GM10248 (cell line): ENCODE measurements at regions of chr20 and their contacts with region 1.

Region 1: GRCh38 chr20:50987592-50988210 is 29.1 kb downstream of the MOCS3 start:
- DNase-seq: peak; percentile 74
- CTCF ChIP-seq: peak; percentile 79

Region 2: GRCh38 chr20:50776122-50776817 is 211.4 kb before region 1 on chr20:
- CTCF ChIA-PET with region 1: no interaction called
- POLR2A ChIA-PET with region 1: no interaction called
- DNase-seq: no peak
- CTCF ChIP-seq: no peak

Region 3: DNA sequence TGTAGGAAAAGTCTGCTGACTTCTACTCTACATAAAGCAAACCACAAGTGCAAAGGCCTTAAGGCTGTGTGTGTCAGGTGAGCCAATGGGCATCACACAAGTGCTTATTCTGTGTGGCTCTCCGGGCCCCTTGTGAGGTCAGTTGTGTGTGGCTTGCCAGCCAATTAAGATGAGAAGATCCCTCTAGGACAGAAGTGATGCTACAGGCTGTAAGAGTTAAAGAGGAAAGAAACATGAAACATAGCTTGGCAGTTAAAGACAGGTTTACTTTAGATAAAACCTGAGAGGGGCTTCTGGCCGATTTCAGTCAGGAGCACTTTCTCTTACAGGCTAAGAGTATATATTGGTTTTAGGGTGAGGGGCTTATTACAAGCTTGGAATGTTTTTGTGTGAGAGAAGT is 312.4 kb after region 1 on chr20:
- CTCF ChIA-PET with region 1: interaction called, 194 read pairs
- POLR2A ChIA-PET with region 1: no interaction called
- DNase-seq: no peak
- CTCF ChIP-seq: no peak

Region 4: DNA sequence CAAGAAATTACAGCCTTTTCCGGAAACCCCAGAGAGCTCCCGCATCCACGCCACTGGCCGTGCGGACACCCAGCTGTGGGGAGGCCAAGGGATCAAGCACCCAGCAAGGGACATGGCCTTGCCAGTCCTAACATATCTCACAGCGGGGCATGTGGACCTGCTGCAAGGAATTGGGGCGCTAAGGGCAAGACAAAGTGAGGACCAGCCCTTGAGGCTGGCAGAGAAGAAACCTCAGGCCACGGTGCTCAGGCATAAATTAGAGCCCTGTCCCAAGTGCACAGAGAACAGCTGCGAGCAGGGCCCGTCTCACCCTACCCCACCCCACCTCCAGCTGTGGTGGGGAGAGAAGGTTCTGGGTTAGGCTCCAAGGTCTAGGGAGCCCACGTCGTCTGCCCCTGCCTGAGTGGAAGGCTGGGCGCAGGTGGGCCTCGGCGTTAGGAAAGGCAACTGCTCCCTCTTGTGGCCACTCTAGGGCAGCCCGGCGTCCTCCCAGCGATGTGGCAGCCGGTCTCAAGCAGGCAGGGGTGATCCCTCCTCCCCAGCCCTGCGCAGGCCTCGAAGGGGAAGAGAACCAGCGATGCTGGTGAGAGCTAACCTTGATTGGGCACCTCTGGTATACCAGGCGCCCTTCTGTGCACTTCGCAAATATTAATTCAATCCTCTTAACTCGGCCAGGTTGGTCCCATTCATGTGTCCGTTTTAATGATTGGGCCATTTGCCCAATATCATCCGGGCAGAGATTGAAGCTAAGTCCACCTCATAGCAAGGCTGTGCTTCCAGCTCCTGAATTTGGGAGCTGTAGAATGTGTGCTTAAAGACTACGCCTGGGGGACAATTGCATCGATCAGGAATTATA is 319.0 kb after region 1 on chr20:
- CTCF ChIA-PET with region 1: interaction called, 194 read pairs
- POLR2A ChIA-PET with region 1: no interaction called
- DNase-seq: peak; percentile 87
- CTCF ChIP-seq: peak; percentile 96

Region 5: DNA sequence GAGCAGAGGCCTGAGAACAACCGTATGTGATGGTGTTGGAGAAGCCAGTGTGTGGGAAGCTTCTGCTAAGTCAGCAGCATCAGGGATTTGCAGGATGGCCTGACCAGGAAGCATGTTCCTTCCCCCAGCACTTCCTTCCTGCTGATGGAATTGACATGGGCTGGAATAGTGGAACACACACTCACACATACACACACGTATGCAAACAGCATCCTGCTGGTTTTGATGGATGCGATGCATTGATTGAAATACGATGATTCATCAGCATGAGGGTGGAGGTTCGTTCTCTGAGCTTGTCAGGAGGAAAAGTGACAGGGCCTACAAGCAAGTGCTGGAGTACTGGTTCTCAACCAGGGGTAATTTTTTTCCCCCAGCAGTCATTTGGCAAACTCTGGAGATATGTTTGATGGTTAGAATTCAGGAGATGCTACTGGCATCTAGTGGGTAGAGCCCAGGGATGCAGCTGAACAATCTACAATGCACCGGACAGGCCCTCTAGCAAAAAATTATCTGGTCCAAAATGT is 325.7 kb after region 1 on chr20:
- CTCF ChIA-PET with region 1: interaction called, 194 read pairs
- POLR2A ChIA-PET with region 1: no interaction called
- DNase-seq: no peak
- CTCF ChIP-seq: no peak

Region 6: DNA sequence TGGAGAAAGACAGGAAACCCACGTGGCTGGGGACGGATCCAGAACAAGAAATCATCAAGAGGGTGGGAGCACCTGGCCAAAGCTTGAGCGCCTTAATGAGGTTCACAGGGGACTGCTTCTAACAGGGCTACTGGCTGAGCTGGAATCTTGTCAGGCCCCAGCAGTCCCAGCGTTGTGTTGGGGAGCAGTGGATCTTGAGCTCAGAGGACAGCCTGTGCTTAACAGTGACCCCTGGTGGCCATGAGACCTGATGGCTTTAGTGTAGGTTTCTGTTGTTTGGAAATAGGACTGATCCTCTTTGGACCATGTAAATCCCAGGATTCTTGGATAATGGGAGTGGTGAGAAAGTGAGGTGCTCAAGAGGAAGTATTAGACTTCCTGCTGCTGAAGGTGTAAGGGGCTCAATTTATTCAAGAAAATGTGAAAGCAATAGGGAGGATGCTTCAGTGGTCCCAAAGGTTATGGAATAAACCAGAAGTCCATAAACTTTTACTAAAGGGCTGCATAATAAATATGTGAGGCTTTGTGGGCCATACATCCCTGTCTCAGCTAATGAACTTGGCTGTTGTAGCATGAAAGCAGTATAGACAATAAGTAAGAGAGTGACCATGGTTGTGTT is 338.6 kb after region 1 on chr20:
- CTCF ChIA-PET with region 1: interaction called, 125 read pairs
- POLR2A ChIA-PET with region 1: no interaction called
- DNase-seq: peak; percentile 40
- CTCF ChIP-seq: peak; percentile 53

Region 7: GRCh38 chr20:51624157-51624731 is 636.5 kb after region 1 on chr20:
- CTCF ChIA-PET with region 1: interaction called, 13 read pairs
- POLR2A ChIA-PET with region 1: no interaction called
- DNase-seq: peak; percentile 83
- CTCF ChIP-seq: peak; percentile 72